ENCODE measurements at regions of chr9 and their contacts with region 1.

Region 1: GRCh38 chr9:87684627-87685219 is 41.2 kb upstream of the CTSL start:
- DNase-seq: peak; percentile 89
- H3K4me3 ChIP-seq: no peak overlapping the region
- H3K27ac ChIP-seq: peak overlapping the region in 3 of 4 donors; percentile 8 to 51 (median 9)
- H3K4me1 ChIP-seq: peaks cover 0 to 26% (median 19%) of the 10 kb centered on the region in 4 donors
- H3K27me3 ChIP-seq: no peaks in the 10 kb centered on the region
- CTCF ChIP-seq: peak; percentile 67 to 82 (median 74)
- EP300 ChIP-seq: no peak
- POLR2A ChIP-seq: no peak

Region 2: DNA sequence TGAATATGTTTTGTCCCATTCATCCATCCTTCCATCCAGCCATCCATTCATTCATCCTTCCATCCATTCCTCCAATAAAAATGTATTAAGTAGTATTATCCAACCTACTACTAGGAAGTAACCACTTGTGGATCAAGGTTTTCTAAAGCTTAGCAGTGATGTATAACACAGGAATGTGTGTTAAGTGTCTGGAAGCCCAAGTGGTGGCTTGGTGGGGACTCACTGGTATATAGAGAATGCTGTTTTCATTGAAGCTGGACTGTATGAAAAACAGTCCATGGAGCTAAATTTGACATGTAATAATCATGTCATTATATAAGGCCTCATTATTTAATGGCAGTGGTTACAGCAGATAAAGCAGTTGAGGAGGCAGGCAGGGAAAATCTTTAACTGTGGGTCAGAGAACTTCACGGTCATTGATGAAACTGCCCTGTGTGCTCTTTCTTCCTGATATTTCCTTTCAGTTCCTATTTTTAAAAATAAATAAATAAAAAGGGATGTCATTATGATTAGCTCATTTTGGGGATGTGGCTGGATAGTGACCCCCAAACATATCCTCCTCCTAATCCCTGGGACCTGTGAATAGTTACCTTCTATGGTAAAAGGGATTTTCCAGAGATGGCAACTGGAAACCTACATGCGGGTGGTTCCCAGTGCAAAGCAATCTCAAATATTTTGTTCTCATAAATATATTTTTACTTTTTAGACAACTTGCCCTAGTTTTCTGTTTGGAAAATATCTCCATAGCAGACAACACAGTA is 104.8 kb before region 1 on chr9:
- intact Hi-C with region 1: no loop called
- DNase-seq: no peak
- H3K4me3 ChIP-seq: no peak overlapping the region
- H3K27ac ChIP-seq: peak overlapping the region in 2 of 4 donors; percentile 68 to 80
- H3K4me1 ChIP-seq: peaks cover 4 to 76% (median 64%) of the 10 kb centered on the region in 4 donors
- H3K27me3 ChIP-seq: no peaks in the 10 kb centered on the region
- CTCF ChIP-seq: no peak
- EP300 ChIP-seq: no peak
- POLR2A ChIP-seq: no peak

Region 3: DNA sequence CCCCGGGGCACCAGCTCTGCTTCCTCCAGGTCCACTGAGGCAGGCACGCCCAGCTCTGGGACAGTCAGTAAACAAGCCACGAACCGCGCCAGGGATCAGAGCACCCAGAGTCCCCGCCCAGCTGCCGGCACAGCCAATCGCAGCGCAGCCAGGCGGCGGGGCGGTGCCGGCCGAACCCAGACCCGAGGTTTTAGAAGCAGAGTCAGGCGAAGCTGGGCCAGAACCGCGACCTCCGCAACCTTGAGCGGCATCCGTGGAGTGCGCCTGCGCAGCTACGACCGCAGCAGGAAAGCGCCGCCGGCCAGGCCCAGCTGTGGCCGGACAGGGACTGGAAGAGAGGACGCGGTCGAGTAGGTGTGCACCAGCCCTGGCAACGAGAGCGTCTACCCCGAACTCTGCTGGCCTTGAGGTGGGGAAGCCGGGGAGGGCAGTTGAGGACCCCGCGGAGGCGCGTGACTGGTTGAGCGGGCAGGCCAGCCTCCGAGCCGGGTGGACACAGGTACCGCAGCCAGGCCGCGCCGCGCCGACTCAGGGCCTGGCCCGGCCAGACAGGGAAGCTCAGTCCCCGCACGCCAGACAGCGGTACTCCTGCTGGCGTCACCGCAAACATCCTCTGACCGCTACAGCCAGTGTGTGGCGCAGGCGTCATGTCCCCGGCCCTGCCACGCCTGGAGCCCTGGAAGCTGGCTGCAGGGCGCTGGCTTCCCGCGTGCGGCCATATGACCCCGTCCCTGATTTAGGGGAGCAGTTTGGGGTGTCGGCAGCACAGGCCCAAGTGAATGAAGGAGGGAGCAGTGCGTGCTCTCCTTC is 41.4 kb after region 1 on chr9 and contains the start of gene CTSL:
- intact Hi-C with region 1: loop called (anchors 5 kb)
- DNase-seq: peak; percentile 97
- H3K4me3 ChIP-seq: peak within 1 kb of the TSS; percentile 70 to 81 (median 76)
- H3K27ac ChIP-seq: peak within 1 kb of the TSS; percentile 92 to 97 (median 95)
- H3K4me1 ChIP-seq: peaks cover 23 to 53% (median 39%) of the 10 kb centered on the region in 4 donors
- H3K27me3 ChIP-seq: no peaks in the 10 kb centered on the region
- CTCF ChIP-seq: peak; percentile 16 to 29 (median 24)
- EP300 ChIP-seq: no peak
- POLR2A ChIP-seq: peak; percentile 28
- total RNA-seq, gene CTSL: 71.4 to 387 (median 94.5) TPM

Region 4: DNA sequence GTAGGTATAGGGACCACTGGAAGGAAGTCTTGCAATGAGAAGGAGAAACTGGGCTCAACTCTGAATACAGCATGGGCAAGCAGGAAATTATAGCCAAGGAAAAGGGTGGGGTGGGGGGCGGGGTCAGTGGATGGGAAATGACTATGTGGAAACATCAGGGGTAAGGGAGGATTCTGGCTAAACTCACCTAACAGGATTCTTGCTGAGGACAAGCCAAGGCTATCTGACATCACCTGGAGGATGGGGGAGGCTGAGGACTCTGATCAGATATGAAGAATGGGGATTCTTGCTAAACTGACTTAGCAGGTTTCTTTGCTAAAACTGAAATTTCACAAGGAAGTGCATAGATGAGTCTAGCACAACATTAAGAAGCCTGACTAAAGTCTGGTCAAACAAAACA is 82.0 kb after region 1 on chr9:
- intact Hi-C with region 1: no loop called
- DNase-seq: no peak
- H3K4me3 ChIP-seq: no peak overlapping the region
- H3K27ac ChIP-seq: no peak overlapping the region
- H3K4me1 ChIP-seq: peaks cover 0 to 4% (median 0%) of the 10 kb centered on the region in 4 donors
- H3K27me3 ChIP-seq: peaks cover 0 to 16% (median 0%) of the 10 kb centered on the region in 4 donors
- CTCF ChIP-seq: no peak
- EP300 ChIP-seq: no peak
- POLR2A ChIP-seq: no peak

Region 5: DNA sequence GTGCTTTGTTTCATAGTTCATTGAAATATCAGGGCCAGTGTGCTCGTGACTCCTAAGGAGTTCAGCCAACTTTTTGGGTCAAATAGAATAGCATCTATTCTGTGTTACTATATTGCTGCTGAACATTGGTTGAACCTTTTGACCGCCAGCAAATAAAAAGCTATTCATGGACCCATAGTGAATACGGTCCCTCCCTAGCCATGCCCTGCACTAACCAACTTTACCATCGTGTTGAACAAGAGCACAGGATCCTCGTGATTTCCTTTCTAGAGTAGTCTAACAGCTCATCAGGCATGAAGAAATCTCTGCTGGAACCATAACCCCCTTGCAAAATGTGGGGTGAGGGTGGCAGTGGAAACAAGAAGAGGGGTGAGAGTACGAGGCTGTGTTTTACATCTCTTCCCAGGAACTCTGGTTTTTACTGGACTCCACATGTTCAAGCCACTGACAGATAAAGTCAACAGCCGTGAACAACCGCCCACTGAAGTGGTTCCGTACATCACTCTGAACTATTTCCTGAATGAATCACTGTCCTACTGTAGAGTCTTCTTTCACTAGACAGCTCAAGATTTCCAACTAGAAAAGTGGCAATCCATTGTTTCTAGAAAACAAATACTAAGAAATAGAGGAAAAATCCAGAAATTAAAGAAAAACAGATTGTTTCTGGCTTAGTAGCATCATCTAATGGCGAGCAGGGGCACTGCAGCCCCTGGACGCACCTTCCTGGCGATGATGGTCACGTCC is 127.8 kb after region 1 on chr9:
- intact Hi-C with region 1: loop called (anchors 5 kb)
- DNase-seq: no peak
- H3K4me3 ChIP-seq: no peak overlapping the region
- H3K27ac ChIP-seq: no peak overlapping the region
- H3K4me1 ChIP-seq: peaks cover 0 to 4% (median 1%) of the 10 kb centered on the region in 4 donors
- H3K27me3 ChIP-seq: no peaks in the 10 kb centered on the region
- CTCF ChIP-seq: peak; percentile 69 to 92 (median 72)
- EP300 ChIP-seq: no peak
- POLR2A ChIP-seq: no peak

Region 6: GRCh38 chr9:87878989-87879511 is 194.3 kb after region 1 on chr9:
- intact Hi-C with region 1: no loop called
- DNase-seq: no peak
- H3K4me3 ChIP-seq: no peak overlapping the region
- H3K27ac ChIP-seq: no peak overlapping the region
- H3K4me1 ChIP-seq: peaks cover 0 to 10% (median 2%) of the 10 kb centered on the region in 4 donors
- H3K27me3 ChIP-seq: no peaks in the 10 kb centered on the region
- CTCF ChIP-seq: no peak
- EP300 ChIP-seq: no peak
- POLR2A ChIP-seq: no peak

Region 7: GRCh38 chr9:87973730-87974292 is 289.1 kb after region 1 on chr9:
- intact Hi-C with region 1: loop called (anchors 10 kb)
- DNase-seq: peak; percentile 89
- H3K4me3 ChIP-seq: peak overlapping the region; percentile 62 to 87 (median 68)
- H3K27ac ChIP-seq: peak overlapping the region; percentile 67 to 80 (median 76)
- H3K4me1 ChIP-seq: peaks cover 5 to 21% (median 18%) of the 10 kb centered on the region in 4 donors
- H3K27me3 ChIP-seq: no peaks in the 10 kb centered on the region
- CTCF ChIP-seq: no peak
- EP300 ChIP-seq: no peak
- POLR2A ChIP-seq: no peak

Region 8: GRCh38 chr9:88041447-88041846 is 356.7 kb after region 1 on chr9:
- intact Hi-C with region 1: loop called (anchors 10 kb)
- DNase-seq: no peak
- H3K4me3 ChIP-seq: no peak overlapping the region
- H3K27ac ChIP-seq: no peak overlapping the region
- H3K4me1 ChIP-seq: no peaks in the 10 kb centered on the region
- H3K27me3 ChIP-seq: no peaks in the 10 kb centered on the region
- CTCF ChIP-seq: peak in 2 of 3 experiments; percentile 22 to 34
- EP300 ChIP-seq: no peak
- POLR2A ChIP-seq: no peak